Lower lobe of right lung (tissue), 2 donors: ENCODE measurements at regions of chr11 and their contacts with region 1.

Region 1: DNA sequence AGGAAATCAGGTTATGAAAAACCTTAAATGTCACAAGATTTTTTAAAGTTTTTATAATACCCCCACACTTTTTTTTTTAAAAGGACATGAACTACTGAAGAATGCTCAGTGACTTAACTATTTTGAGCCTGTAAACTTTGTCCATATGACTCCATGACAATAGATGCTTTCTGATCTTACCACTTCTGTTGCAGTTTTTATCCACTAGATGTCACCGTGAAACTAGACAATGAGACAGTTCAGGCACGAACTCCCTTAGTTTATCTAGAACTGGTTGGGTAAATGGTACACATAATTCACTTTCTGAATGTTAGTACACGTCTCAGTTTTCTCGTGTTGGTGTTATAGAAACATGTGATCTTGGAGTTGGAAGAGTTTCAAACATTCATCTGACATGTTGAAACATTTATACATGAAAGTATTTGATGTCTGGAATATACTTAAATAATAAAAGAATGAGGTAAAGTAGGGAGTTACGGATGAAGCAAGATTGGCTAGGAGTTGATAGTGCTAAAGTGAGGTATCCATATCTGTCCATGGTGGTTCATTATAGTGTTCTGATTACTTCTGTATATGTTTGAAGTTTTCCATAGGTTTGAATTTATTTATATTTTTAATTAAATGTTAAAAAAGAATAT is 8.1 kb downstream of the CCDC15 start:
- DNase-seq: no peak
- ATAC-seq: peak; percentile 67 to 85
- H3K4me3 ChIP-seq: no peak overlapping the region
- H3K27ac ChIP-seq: no peak overlapping the region
- H3K4me1 ChIP-seq: no peaks in the 10 kb centered on the region
- H3K27me3 ChIP-seq: no peaks in the 10 kb centered on the region
- CTCF ChIP-seq: peak; percentile 71

Region 2: GRCh38 chr11:124855437-124855836 is 106.7 kb before region 1 on chr11:
- intact Hi-C with region 1: no loop called
- DNase-seq: no peak
- ATAC-seq: no peak
- H3K4me3 ChIP-seq: no peak overlapping the region
- H3K27ac ChIP-seq: no peak overlapping the region
- H3K4me1 ChIP-seq: no peaks in the 10 kb centered on the region
- H3K27me3 ChIP-seq: peaks cover 41% of the 10 kb centered on the region
- CTCF ChIP-seq: no peak

Region 3: GRCh38 chr11:124900464-124900863 is 61.6 kb before region 1 on chr11:
- intact Hi-C with region 1: no loop called
- DNase-seq: no peak
- ATAC-seq: peak; percentile 7 to 37
- H3K4me3 ChIP-seq: no peak overlapping the region
- H3K27ac ChIP-seq: peak overlapping the region; percentile 85
- H3K4me1 ChIP-seq: peaks cover 22% of the 10 kb centered on the region
- H3K27me3 ChIP-seq: no peaks in the 10 kb centered on the region
- CTCF ChIP-seq: no peak

Region 4: GRCh38 chr11:125141686-125142535 is 179.8 kb after region 1 on chr11:
- intact Hi-C with region 1: loop called (anchors 5 kb)
- DNase-seq: peak; percentile 65
- ATAC-seq: peak; percentile 87 to 89
- H3K4me3 ChIP-seq: no peak overlapping the region
- H3K27ac ChIP-seq: no peak overlapping the region
- H3K4me1 ChIP-seq: peaks cover 8% of the 10 kb centered on the region
- H3K27me3 ChIP-seq: peaks cover 24% of the 10 kb centered on the region
- CTCF ChIP-seq: peak; percentile 98